ENCODE measurements at regions of chr3 and their contacts with region 1.

Region 1: GRCh38 chr3:33074217-33075067 is 22.5 kb downstream of the GLB1 start:
- DNase-seq: peak; percentile 75 to 78
- H3K4me3 ChIP-seq: no peak overlapping the region
- H3K4me3 Mint-ChIP-seq: no peak overlapping the region
- H3K27ac Mint-ChIP-seq: no peak overlapping the region
- H3K4me1 ChIP-seq: peaks cover 36% of the 10 kb centered on the region
- H3K4me1 Mint-ChIP-seq: peaks cover 47% of the 10 kb centered on the region
- H3K27me3 ChIP-seq: no peaks in the 10 kb centered on the region
- H3K27me3 Mint-ChIP-seq: no peaks in the 10 kb centered on the region
- CTCF ChIP-seq: peak; percentile 83 to 91

Region 2: DNA sequence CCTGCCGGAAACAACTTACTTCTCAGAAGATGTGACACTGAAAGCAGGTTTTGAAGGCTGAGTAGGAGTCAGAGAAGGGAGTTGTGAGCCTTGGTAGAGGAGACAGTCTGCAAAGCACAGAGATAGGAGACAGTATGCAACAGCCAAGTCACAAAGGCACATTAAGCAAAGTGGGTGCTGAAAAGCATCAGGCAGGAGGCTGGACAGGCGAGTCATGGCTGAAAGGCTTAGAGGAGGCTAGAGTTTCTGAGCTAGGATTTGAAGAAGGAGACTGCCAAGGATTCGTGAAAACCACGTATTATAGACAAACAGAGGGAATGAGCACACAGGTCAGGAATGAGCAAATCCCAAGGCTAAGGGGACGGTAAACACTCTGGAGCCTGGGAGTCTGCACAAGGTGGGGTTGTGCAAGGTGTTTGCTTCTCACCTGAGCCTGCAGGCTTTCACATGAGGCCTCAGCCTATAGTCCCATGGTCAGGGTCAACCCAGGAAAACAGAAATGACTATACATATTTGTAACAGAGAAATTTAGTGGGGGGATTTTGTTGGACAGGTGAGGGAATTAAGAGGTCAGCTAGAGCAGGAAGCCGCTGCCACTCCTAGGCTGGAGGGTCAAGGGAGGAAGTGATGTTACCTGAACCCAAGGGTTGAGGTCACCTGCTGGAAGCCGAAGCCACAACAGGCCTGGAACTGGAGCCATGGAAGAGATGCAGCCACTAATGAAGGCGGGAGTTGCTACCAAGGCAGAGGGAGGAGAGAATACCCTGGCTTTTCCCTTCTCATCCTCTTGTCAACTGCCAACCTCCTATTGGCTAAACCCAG is 279.7 kb before region 1 on chr3:
- CTCF ChIA-PET with region 1: no interaction called
- POLR2A ChIA-PET with region 1: no interaction called
- intact Hi-C with region 1: loop called (anchors 5 kb)
- DNase-seq: peak; percentile 83 to 87
- H3K4me3 ChIP-seq: no peak overlapping the region
- H3K4me3 Mint-ChIP-seq: peak overlapping the region; percentile 8
- H3K27ac Mint-ChIP-seq: peak overlapping the region; percentile 55
- H3K4me1 ChIP-seq: peaks cover 43% of the 10 kb centered on the region
- H3K4me1 Mint-ChIP-seq: peaks cover 39% of the 10 kb centered on the region
- H3K27me3 ChIP-seq: no peaks in the 10 kb centered on the region
- H3K27me3 Mint-ChIP-seq: no peaks in the 10 kb centered on the region
- CTCF ChIP-seq: no peak

Region 3: GRCh38 chr3:32947789-32948238 is 126.6 kb before region 1 on chr3:
- CTCF ChIA-PET with region 1: interaction called, 10 read pairs
- POLR2A ChIA-PET with region 1: no interaction called
- intact Hi-C with region 1: loop called (anchors 1 kb)
- DNase-seq: peak; percentile 82 to 85
- H3K4me3 ChIP-seq: no peak overlapping the region
- H3K4me3 Mint-ChIP-seq: no peak overlapping the region
- H3K27ac Mint-ChIP-seq: no peak overlapping the region
- H3K4me1 ChIP-seq: no peaks in the 10 kb centered on the region
- H3K4me1 Mint-ChIP-seq: peaks cover 10% of the 10 kb centered on the region
- H3K27me3 ChIP-seq: no peaks in the 10 kb centered on the region; the same call in 1 of the 2 replicates
- H3K27me3 Mint-ChIP-seq: no peaks in the 10 kb centered on the region
- CTCF ChIP-seq: peak; percentile 54 to 82

Region 4: DNA sequence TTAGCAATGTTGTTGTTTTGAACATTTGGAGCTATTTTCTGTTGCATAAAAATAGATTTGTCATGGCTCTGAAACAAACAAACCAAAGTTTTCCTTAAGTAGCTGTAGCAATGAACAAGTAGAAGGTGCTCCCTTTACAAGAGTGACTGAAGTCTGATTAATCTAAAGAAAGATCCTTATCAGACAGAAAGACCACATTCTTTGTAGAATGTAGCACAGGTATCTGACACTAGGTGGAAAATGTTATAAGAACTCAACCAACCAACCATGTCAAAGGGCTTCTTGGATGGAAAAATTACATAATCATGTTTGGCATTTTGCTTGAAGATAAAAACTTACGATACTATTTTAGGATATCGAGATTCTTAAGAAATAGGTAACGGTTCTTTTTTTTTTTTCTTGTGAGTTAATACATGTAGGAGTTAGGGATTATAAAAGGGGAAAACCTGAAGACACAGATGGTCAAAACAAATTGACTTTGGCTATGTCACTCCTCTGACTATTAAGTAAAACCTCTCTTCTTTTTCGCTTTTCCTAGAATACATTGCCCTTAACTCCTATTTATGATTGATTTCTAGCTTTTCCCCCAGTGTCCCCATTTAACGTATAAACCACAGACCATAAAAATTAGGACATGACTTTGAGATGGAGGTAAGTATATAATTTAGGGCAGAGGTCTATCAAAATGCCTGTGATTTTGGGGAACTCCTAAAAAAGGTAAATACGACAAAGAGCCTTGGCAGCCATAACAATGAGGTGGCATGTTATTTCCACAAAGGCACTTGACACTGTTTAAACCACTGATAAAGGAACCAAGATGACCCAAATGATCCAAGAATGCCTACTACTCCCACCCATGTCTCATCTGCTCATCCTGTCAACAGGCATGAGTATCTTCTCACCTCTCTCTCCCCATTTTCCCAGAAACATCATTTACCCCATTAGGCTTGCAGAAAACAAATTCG is 51.0 kb before region 1 on chr3:
- CTCF ChIA-PET with region 1: no interaction called
- POLR2A ChIA-PET with region 1: no interaction called
- intact Hi-C with region 1: loop called (anchors 1 kb)
- DNase-seq: no peak
- H3K4me3 ChIP-seq: no peak overlapping the region
- H3K4me3 Mint-ChIP-seq: no peak overlapping the region
- H3K27ac Mint-ChIP-seq: peak overlapping the region; percentile 43
- H3K4me1 ChIP-seq: peaks cover 10% of the 10 kb centered on the region; the same call in 1 of the 2 replicates
- H3K4me1 Mint-ChIP-seq: peaks cover 17% of the 10 kb centered on the region
- H3K27me3 ChIP-seq: no peaks in the 10 kb centered on the region
- H3K27me3 Mint-ChIP-seq: no peaks in the 10 kb centered on the region
- CTCF ChIP-seq: no peak

Region 5: GRCh38 chr3:33057320-33058298 is 16.8 kb before region 1 on chr3:
- CTCF ChIA-PET with region 1: interaction called, 9 read pairs
- POLR2A ChIA-PET with region 1: no interaction called
- intact Hi-C with region 1: loop called (anchors 1 kb)
- DNase-seq: peak; percentile 71 to 73
- H3K4me3 ChIP-seq: 0 out of 2 replicates have a peak overlapping the region, but pooled peaks have one; percentile 5
- H3K4me3 Mint-ChIP-seq: peak overlapping the region; percentile 12
- H3K27ac Mint-ChIP-seq: peak overlapping the region; percentile 30
- H3K4me1 ChIP-seq: peaks cover 52% of the 10 kb centered on the region
- H3K4me1 Mint-ChIP-seq: peaks cover 41% of the 10 kb centered on the region
- H3K27me3 ChIP-seq: no peaks in the 10 kb centered on the region
- H3K27me3 Mint-ChIP-seq: no peaks in the 10 kb centered on the region
- CTCF ChIP-seq: no peak

Measured in Caco-2 (cell line).